CD4-positive, alpha-beta T cell (primary cell): ENCODE measurements at regions of chr4 and their contacts with region 1.

Region 1: DNA sequence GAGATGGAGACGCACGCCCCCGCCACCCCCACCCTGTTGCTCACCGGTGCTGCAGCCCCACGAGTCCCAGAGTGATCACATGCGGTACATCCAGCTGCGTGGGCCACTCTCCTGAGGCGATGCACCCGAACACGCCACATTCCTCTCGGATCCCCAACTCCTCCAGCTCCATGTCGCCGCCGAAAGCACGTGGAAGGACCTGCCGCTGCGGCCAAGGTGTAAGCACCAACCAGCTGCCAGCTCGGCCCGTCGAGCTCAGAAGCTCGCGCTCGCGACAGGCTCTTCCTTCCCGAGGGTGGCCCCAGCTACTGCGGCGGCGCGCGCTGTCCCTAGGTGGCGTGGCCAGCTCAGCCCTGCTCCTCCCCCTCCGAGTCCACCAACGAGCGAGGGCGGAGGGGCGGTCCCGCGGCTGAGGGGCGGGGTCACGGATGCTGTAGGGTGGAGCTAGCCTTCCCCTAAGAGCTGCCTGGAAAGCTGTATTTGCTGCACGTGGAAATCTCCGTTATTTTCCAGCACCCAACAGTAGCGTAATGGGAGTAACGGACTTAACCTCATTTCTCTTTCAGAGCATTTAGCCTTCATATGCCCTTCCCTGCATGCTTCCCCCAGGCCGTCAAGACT is at the start of gene PPAT:
- DNase-seq: peak; percentile 97 to 99 (median 99)
- ATAC-seq: peak; percentile 80
- H3K4me3 ChIP-seq: peak within 1 kb of the TSS; percentile 91
- H3K4me3 Mint-ChIP-seq: peak within 1 kb of the TSS; percentile 92
- H3K27ac ChIP-seq: peak within 1 kb of the TSS; percentile 59 to 91
- H3K27ac Mint-ChIP-seq: peak within 1 kb of the TSS; percentile 77
- H3K4me1 ChIP-seq: peaks cover 26% of the 10 kb centered on the region
- H3K4me1 Mint-ChIP-seq: peaks cover 41% of the 10 kb centered on the region
- H3K27me3 ChIP-seq: no peaks in the 10 kb centered on the region
- H3K27me3 Mint-ChIP-seq: no peaks in the 10 kb centered on the region
- CTCF ChIP-seq: peak; percentile 23
- total RNA-seq, gene PPAT: 4.7 to 6.3 TPM

Region 2: DNA sequence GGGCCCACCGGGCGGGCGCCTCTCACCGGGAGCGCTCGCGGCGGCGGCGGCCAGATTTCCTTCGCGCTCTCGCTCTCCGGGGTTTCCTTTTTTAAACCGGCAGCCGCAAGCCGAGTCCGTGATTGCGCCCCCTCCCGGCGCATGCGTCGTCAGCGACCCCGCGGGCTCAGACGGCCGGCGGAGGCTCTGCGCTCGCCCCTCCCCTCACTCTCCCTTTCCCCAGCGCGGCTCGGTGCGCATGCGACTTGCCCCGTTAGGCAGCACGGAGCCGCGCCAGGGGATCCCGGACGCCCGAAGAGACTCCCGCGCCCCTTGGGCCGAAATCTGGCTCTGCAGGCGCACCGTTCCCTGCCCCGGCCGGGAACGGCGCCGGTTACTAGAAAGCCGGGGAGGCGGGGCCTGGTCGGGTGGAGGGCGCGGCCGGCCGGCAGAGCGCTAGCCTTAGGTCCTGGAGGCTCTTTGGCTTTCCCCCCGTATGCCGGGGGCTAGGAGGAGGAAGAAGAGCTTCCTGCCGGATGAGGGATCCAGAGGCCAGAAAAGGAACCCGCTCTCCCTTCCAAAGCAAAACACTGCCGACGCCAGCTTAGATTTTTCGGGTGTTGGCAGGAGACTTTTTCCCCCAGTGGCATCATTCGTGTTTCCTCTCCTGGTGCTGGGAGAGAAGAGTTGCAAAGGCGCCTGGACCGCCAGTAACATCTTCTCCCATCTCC is 888.5 kb before region 1 on chr4 and contains the start of gene CLOCK:
- CTCF ChIA-PET with region 1: no interaction called
- POLR2A ChIA-PET with region 1: interaction called, 12 read pairs
- intact Hi-C with region 1: no loop called
- DNase-seq: peak; percentile 63 to 94 (median 81)
- ATAC-seq: peak; percentile 71
- H3K4me3 ChIP-seq: peak within 1 kb of the TSS; percentile 96
- H3K4me3 Mint-ChIP-seq: peak within 1 kb of the TSS; percentile 93
- H3K27ac ChIP-seq: peak within 1 kb of the TSS; percentile 75 to 82
- H3K27ac Mint-ChIP-seq: peak within 1 kb of the TSS; percentile 85
- H3K4me1 ChIP-seq: peaks cover 5% of the 10 kb centered on the region
- H3K4me1 Mint-ChIP-seq: peaks cover 39% of the 10 kb centered on the region
- H3K27me3 ChIP-seq: no peaks in the 10 kb centered on the region
- H3K27me3 Mint-ChIP-seq: no peaks in the 10 kb centered on the region
- CTCF ChIP-seq: peak; percentile 47
- total RNA-seq, gene CLOCK: 4.9 to 5.6 TPM

Region 3: GRCh38 chr4:56424697-56425514 is 10.5 kb before region 1 on chr4:
- CTCF ChIA-PET with region 1: interaction called, 25 read pairs
- POLR2A ChIA-PET with region 1: interaction called, 24 read pairs
- intact Hi-C with region 1: no loop called
- DNase-seq: peak in 10 of 14 experiments; percentile 18 to 76 (median 31)
- ATAC-seq: peak; percentile 48
- H3K4me3 ChIP-seq: no peak overlapping the region
- H3K4me3 Mint-ChIP-seq: no peak overlapping the region
- H3K27ac ChIP-seq: no peak overlapping the region
- H3K27ac Mint-ChIP-seq: no peak overlapping the region
- H3K4me1 ChIP-seq: no peaks in the 10 kb centered on the region
- H3K4me1 Mint-ChIP-seq: peaks cover 9% of the 10 kb centered on the region
- H3K27me3 ChIP-seq: no peaks in the 10 kb centered on the region
- H3K27me3 Mint-ChIP-seq: no peaks in the 10 kb centered on the region
- CTCF ChIP-seq: peak; percentile 86

Region 4: GRCh38 chr4:56467284-56468096 is 32.1 kb after region 1 on chr4 and contains the start of gene SRP72:
- CTCF ChIA-PET with region 1: interaction called, 8 read pairs
- POLR2A ChIA-PET with region 1: interaction called, 65 read pairs
- intact Hi-C with region 1: loop called (anchors 1 kb)
- DNase-seq: peak; percentile 82 to 96 (median 87)
- ATAC-seq: peak; percentile 95
- H3K4me3 ChIP-seq: peak within 1 kb of the TSS; percentile 93
- H3K4me3 Mint-ChIP-seq: peak within 1 kb of the TSS; percentile 95
- H3K27ac ChIP-seq: peak within 1 kb of the TSS; percentile 84 to 94
- H3K27ac Mint-ChIP-seq: peak within 1 kb of the TSS; percentile 96
- H3K4me1 ChIP-seq: peaks cover 26% of the 10 kb centered on the region
- H3K4me1 Mint-ChIP-seq: peaks cover 66% of the 10 kb centered on the region
- H3K27me3 ChIP-seq: no peaks in the 10 kb centered on the region
- H3K27me3 Mint-ChIP-seq: no peaks in the 10 kb centered on the region
- CTCF ChIP-seq: no peak
- total RNA-seq, gene SRP72: 108 to 119 TPM

Region 5: DNA sequence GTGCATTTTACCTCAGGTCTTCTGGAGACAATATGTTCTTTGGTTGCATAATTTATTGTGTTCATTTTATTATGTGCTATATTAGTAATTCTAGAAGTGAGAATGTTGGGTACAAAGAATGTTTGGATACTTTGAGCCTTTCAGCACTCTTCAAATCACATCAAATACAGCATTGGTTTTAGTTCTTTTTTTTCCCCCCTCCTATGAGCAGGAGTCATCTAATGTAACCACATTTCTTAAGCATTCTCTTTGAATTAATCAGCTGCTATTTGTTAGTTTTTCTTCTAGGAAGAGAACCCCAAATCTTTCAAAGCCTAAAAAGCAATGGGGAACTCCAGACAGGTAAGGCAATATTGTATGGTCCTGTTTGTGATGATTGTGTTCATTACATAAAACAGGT is 116.9 kb after region 1 on chr4:
- CTCF ChIA-PET with region 1: no interaction called
- POLR2A ChIA-PET with region 1: no interaction called
- intact Hi-C with region 1: no loop called
- DNase-seq: no peak
- ATAC-seq: no peak
- H3K4me3 ChIP-seq: no peak overlapping the region
- H3K4me3 Mint-ChIP-seq: no peak overlapping the region
- H3K27ac ChIP-seq: no peak overlapping the region
- H3K27ac Mint-ChIP-seq: no peak overlapping the region
- H3K4me1 ChIP-seq: no peaks in the 10 kb centered on the region
- H3K4me1 Mint-ChIP-seq: peaks cover 5% of the 10 kb centered on the region
- H3K27me3 ChIP-seq: no peaks in the 10 kb centered on the region
- H3K27me3 Mint-ChIP-seq: no peaks in the 10 kb centered on the region
- CTCF ChIP-seq: no peak

Region 6: DNA sequence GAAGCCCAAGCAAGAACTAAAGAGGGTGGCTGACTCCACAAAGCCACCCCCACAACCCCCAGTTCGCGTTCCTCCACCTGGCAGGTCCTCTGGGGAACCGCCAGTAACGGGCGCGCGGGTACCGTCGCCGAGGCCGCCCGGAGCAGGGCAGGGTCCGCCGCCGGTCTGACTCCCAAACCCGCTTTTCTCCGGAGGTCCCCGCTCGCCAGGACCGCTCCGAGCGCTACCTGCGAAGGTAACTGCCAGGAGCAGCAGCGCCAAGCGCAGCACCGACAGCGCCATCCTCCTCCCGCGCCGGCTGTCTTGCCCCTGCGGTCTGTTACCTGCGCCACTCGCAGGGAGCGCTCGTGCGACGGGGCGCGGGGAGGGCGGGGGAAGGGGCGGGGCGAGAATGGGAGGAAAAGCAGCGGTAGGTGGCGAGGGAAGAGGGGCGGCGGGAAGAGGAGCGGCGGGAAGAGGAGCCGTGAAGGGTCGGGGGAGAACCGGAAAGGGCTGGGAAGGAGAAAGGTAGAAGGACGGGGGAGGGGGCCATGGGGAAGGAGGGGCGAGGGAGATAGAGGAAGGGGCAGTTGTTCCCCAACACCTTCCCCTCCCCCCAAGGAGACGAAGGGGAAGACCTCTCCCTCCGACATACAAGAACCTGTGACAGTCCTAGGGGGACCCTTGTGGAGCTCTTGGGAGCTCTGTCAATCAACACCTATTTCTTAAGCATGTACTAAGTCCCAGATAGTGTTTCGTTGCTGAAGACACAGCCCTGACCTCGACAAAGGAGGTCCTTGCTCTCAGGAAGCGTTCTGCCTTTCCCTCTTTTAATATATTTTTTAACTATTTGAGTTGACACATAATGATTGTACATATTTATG is 386.2 kb after region 1 on chr4 and contains the start of gene SPINK2:
- CTCF ChIA-PET with region 1: no interaction called
- POLR2A ChIA-PET with region 1: interaction called, 10 read pairs
- intact Hi-C with region 1: loop called in 1 of 2 experiments (anchors 5 kb)
- DNase-seq: peak; percentile 53 to 90 (median 71)
- ATAC-seq: peak; percentile 96
- H3K4me3 ChIP-seq: peak within 1 kb of the TSS; percentile 63
- H3K4me3 Mint-ChIP-seq: peak within 1 kb of the TSS; percentile 85
- H3K27ac ChIP-seq: no peak within 1 kb of the TSS
- H3K27ac Mint-ChIP-seq: peak within 1 kb of the TSS; percentile 76
- H3K4me1 ChIP-seq: peaks cover 33% of the 10 kb centered on the region
- H3K4me1 Mint-ChIP-seq: peaks cover 36% of the 10 kb centered on the region
- H3K27me3 ChIP-seq: no peaks in the 10 kb centered on the region
- H3K27me3 Mint-ChIP-seq: no peaks in the 10 kb centered on the region
- CTCF ChIP-seq: peak; percentile 48
- total RNA-seq, gene SPINK2: 4.0 to 5.2 TPM